Activated CD4-positive, alpha-beta T cell treated with anti-CD3 and anti-CD28 coated beads for 36 hours (primary cell): ENCODE measurements at regions of chr17 and their contacts with region 1.

Region 1: DNA sequence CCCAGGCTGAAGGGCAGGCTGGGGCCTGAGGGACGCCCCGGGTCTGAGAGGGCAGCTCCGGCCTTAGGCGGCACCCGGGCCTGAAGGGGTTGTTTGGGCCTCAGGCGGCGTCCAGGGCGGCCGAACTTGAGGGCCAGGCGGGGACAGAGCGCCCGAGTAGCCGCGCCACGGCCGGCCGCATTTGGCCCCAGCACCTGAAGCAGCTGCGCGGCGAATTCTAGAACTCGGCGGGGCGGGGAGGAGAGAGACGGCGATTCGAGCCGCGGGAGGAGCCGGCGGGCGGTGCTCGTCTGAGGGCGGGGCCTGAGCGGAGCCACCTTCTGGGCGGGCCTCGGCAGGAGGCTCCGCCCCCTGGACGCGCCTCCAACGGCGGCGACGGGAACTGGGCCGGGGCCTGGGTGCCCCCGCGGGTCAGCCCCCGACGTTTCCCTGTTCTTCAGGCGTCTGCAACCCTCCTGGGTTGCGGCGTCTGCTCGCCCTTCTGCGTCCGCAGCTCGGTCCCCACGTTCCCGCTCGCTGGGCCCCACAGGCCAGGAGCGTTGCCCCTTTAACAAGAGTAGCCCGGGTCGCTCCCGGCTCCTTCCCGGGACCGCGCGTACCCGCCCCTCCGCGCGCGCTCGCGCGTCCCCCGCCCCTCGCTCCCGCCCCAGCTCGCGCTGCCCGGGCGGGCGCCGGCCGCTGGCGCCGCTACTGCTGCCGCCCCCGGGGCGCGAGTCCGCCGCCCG is at the starts of genes INCA1 and KIF1C:
- DNase-seq: peak; percentile 96
- ATAC-seq: peak; percentile 95
- H3K4me3 Mint-ChIP-seq: peak within 1 kb of the TSS; percentile 80
- H3K27ac Mint-ChIP-seq: peak within 1 kb of the TSS; percentile 55
- H3K4me1 Mint-ChIP-seq: peaks cover 20% of the 10 kb centered on the region
- H3K27me3 Mint-ChIP-seq: no peaks in the 10 kb centered on the region
- total RNA-seq, gene INCA1: 0.18 to 0.28 TPM
- total RNA-seq, gene KIF1C: 32.6 to 43.0 TPM

Region 2: DNA sequence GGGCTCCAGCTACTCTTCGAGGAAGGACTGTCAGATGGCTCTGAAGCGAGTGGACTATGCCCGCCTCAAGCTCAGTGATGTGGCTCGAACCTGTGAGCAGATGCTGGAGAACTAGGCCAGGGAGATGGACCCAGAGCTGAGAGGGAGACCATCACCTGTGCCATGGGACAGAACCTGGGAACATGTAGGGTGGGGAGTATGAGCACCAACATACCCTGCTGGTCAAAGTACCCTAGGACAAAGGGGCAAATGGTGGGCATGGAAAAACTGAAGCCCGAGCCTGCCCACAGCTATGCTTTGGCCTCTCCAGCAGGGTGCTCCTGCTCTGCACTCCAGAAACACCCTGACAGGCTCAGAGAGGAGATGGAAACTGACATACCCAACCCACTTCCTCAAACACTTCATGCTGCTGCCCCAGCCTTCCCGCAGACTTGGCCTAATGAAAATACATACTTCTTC is 264.4 kb before region 1 on chr17:
- CTCF ChIA-PET with region 1: no interaction called
- POLR2A ChIA-PET with region 1: no interaction called
- intact Hi-C with region 1: loop called in 1 of 2 experiments (anchors 1 kb)
- DNase-seq: no peak
- ATAC-seq: no peak
- H3K4me3 Mint-ChIP-seq: no peak overlapping the region
- H3K27ac Mint-ChIP-seq: peak overlapping the region; percentile 17
- H3K4me1 Mint-ChIP-seq: peaks cover 39% of the 10 kb centered on the region
- H3K27me3 Mint-ChIP-seq: peaks cover under 1% of the 10 kb centered on the region

Region 3: DNA sequence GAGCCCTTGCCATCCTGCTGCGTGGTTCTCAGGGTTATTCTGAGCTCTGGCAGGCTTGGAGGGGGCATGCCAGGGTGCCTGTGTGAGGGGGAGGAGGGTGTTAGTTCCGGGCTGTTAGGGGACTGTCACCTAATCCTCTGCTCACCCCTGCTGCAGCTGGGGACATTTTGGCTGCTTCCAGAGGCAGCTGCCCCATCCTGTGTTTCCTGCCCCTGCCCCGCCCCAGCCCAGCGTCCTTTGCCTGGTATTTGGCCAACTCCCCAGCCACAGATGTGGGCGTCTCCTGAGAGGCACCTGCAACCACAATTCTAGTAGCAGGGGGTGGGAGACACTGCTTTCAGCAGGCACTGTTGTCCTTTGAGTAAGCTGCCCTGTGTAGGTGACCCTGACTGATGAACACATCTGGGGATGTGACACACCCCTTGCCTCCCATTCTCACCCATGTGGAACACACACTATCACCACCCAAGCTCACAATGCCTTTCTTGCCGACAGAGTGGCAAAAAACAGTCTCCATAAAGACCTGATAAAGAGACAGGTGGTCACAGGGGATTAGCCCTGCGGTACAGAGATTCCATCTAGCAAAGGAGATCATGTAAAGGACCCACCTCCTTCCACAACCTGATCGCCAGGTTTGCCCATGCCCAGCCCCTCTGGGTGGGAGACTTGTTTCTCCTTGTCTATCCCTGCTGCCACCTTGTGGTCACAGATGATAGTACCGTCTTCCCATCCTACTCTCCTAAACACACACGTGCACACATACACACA is 94.2 kb before region 1 on chr17 and contains the start of gene CHRNE:
- CTCF ChIA-PET with region 1: no interaction called
- POLR2A ChIA-PET with region 1: no interaction called
- intact Hi-C with region 1: loop called in 1 of 2 experiments (anchors 1 kb)
- DNase-seq: peak; percentile 89
- ATAC-seq: peak; percentile 44
- H3K4me3 Mint-ChIP-seq: peak within 1 kb of the TSS; percentile 65
- H3K27ac Mint-ChIP-seq: peak within 1 kb of the TSS; percentile 72
- H3K4me1 Mint-ChIP-seq: peaks cover 26% of the 10 kb centered on the region
- H3K27me3 Mint-ChIP-seq: no peaks in the 10 kb centered on the region
- total RNA-seq, gene CHRNE: 0.59 to 0.84 TPM

Region 4: GRCh38 chr17:4967539-4968165 is 29.8 kb before region 1 on chr17 and contains the start of gene SPAG7:
- CTCF ChIA-PET with region 1: interaction called, 4 read pairs
- POLR2A ChIA-PET with region 1: interaction called, 3 read pairs
- intact Hi-C with region 1: loop called in 1 of 2 experiments (anchors 1 kb)
- DNase-seq: peak; percentile 96
- ATAC-seq: peak; percentile 54
- H3K4me3 Mint-ChIP-seq: no peak within 1 kb of the TSS
- H3K27ac Mint-ChIP-seq: no peak within 1 kb of the TSS
- H3K4me1 Mint-ChIP-seq: peaks cover 40% of the 10 kb centered on the region
- H3K27me3 Mint-ChIP-seq: no peaks in the 10 kb centered on the region
- total RNA-seq, gene SPAG7: 61.4 to 69.4 TPM

Region 5: GRCh38 chr17:5031365-5032082 is 34.1 kb after region 1 on chr17:
- CTCF ChIA-PET with region 1: interaction called, 3 read pairs
- POLR2A ChIA-PET with region 1: no interaction called
- intact Hi-C with region 1: loop called in 1 of 2 experiments (anchors 1 kb)
- DNase-seq: peak; percentile 91
- ATAC-seq: peak; percentile 82
- H3K4me3 Mint-ChIP-seq: peak overlapping the region; percentile 68
- H3K27ac Mint-ChIP-seq: peak overlapping the region; percentile 85
- H3K4me1 Mint-ChIP-seq: peaks cover 19% of the 10 kb centered on the region
- H3K27me3 Mint-ChIP-seq: peaks cover 3% of the 10 kb centered on the region